BJ (cell line): ENCODE measurements at regions of chr16 and their contacts with region 1.

Region 1: DNA sequence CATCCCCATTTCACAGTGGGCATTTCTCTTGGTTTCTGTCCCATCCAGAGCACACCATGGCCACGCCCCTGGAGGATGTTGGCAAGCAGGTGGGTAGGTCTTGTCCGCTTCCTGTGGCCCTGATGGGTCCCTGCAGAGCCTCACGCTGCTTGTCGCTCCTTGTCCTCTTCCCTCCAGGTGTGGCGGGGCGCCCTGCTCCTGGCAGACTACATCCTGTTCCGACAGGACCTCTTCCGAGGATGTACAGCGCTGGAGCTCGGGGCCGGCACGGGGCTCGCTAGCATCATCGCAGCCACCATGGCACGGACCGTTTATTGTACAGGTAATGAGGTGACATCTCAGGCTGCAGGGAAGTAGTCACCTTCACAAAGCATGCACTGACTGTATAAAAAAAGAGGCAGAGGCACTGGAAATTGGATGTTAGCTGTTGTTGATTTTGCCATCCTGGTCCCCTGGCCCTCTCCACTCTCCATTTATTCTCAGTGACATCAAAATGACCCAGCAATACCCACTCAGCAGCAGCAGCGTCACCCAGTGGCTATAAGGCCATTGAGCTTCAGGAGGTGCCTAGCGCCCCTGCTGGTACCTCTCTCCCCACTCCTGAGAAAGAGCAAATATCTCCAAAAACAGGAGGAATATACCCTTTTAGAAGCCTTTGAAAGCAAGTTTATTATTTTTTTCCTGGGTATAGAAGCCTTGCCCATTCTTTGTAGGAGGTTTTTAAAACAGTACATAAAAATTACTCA is 13.7 kb downstream of the METTL22 start:
- DNase-seq: no peak
- H3K4me3 ChIP-seq: no peak overlapping the region
- H3K27me3 ChIP-seq: no peaks in the 10 kb centered on the region
- CTCF ChIP-seq: peak; percentile 60

Region 2: GRCh38 chr16:8572919-8573724 is 62.0 kb before region 1 on chr16:
- CTCF ChIA-PET with region 1: interaction called, 15 read pairs
- POLR2A ChIA-PET with region 1: no interaction called
- DNase-seq: no peak
- H3K4me3 ChIP-seq: no peak overlapping the region
- H3K27me3 ChIP-seq: no peaks in the 10 kb centered on the region; the same call in none of the 2 replicates
- CTCF ChIP-seq: peak; percentile 57

Region 3: GRCh38 chr16:8720080-8720966 is 85.2 kb after region 1 on chr16:
- CTCF ChIA-PET with region 1: no interaction called
- POLR2A ChIA-PET with region 1: no interaction called
- DNase-seq: no peak
- H3K4me3 ChIP-seq: no peak overlapping the region
- H3K27me3 ChIP-seq: no peaks in the 10 kb centered on the region; the same call in 1 of the 2 replicates
- CTCF ChIP-seq: no peak